ENCODE measurements at regions of chr18 and their contacts with region 1.

Region 1: GRCh38 chr18:3245853-3246634 is 1.6 kb upstream of the MYL12A start:
- DNase-seq: peak; percentile 82
- ATAC-seq: peak; percentile 59
- H3K4me3 ChIP-seq: no peak overlapping the region
- H3K27ac ChIP-seq: peak overlapping the region; percentile 97; the same call in 1 of the 2 replicates
- H3K4me1 ChIP-seq: peaks cover 6% of the 10 kb centered on the region; the same call in 1 of the 2 replicates
- H3K27me3 ChIP-seq: no peaks in the 10 kb centered on the region
- CTCF ChIP-seq: peak; percentile 89
- POLR2A ChIP-seq: peak; percentile 45; the same call in 1 of the 2 replicates
- RAD21 ChIP-seq: peak; percentile 95

Region 2: DNA sequence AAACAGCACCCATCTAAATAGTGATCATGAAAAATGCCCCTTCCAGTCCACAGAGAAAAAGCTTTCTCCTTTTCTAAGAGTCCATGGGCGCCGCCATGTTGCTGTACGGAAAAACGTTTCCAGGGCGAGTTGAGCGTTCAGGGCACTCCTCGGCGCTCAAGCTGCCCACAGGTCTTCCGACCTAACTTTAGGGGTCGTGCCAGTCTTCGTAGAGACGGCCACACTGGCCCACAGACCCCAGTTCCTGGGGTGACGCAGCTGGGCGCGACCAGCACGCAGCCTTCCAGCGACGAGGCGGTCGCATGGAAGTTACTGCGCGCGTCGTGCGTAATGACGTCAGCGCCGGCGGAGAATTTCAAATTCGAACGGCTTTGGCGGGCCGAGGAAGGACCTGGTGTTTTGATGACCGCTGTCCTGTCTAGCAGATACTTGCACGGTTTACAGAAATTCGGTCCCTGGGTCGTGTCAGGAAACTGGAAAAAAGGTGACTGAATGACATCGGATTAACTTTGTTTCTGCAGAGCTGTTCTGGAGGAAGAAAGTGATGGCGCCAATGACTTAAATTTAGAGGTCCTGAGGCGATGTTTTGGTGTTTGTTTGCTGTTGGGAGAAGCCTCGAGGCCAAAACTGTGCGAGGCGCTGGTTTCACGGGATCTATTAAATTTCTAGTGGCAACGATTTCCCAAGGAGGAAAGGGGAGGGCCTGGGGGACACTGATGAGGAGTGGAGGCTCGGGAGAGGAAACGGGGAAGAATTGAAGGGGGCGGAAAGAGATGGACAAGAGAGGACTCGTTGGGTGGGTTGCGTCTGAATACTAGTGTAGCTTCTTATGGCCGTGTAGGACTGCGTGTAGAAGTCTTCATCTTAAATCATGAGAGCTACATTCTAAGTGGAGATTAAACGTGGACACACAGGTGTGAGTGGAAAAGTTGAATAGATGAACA is 674.6 kb before region 1 on chr18 and contains the starts of genes METTL4 and NDC80:
- CTCF ChIA-PET with region 1: interaction called, 3 read pairs
- POLR2A ChIA-PET with region 1: no interaction called
- dilution Hi-C with region 1: no loop called
- in situ Hi-C with region 1: no loop called
- intact Hi-C with region 1: loop called (anchors 1 kb)
- DNase-seq: peak; percentile 86
- ATAC-seq: peak; percentile 87
- H3K4me3 ChIP-seq: peak within 1 kb of the TSS; percentile 66
- H3K27ac ChIP-seq: peak within 1 kb of the TSS; percentile 91
- H3K4me1 ChIP-seq: peaks cover 5% of the 10 kb centered on the region
- H3K27me3 ChIP-seq: no peaks in the 10 kb centered on the region
- CTCF ChIP-seq: no peak
- POLR2A ChIP-seq: peak; percentile 69
- RAD21 ChIP-seq: no peak
- total RNA-seq, gene METTL4: 5.4 and 6.7 TPM in 2 replicates
- total RNA-seq, gene NDC80: 11.8 and 15.3 TPM in 2 replicates

Region 3: DNA sequence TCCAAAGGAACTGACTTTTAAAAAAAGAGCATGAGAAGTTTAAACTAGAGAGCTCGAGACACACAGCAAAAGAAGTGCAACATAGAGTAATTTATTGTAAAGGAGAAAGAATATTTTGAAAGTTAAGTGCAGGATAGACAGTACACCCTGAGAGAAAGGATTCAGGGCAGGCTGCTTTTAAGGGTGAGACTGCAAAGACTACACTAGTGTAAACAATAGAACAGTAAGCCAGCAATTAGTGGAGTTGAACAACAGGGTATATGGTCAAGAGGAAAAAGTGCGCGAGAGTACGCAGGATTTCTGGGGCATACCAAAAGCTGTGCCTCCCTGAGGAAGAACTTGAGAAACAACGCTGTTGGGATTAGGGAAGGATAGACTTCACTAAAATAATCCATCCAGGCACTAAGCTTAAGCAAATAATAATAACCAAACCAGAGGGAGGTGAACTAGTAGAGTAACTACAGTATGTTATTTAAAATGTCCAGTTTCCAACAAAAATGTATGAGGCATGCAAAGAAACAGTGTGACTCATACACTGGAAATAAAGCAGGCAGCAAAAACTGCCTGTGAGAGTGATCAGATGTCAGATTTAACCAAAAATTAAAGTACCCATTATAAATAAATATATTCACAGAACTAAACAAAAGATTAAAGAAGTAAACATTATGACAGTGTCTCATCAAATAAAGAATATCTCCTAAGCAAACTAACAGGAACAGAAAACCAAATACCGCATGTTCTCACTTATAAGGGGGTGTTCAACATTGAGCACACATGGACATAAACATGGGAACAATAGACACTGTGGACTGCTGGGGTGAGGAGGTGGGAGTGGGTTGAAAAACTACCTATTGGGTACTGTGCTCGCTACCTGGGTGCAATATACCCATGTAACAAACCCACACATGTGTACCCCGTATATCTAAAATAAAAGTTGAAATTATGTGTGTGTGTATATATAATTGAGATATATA is 439.8 kb before region 1 on chr18:
- CTCF ChIA-PET with region 1: no interaction called
- POLR2A ChIA-PET with region 1: no interaction called
- dilution Hi-C with region 1: no loop called
- in situ Hi-C with region 1: no loop called
- intact Hi-C with region 1: loop called (anchors 10 kb)
- DNase-seq: peak; percentile 73
- ATAC-seq: peak; percentile 92
- H3K4me3 ChIP-seq: no peak overlapping the region
- H3K27ac ChIP-seq: peak overlapping the region; percentile 70; the same call in 1 of the 2 replicates
- H3K4me1 ChIP-seq: peaks cover 8% of the 10 kb centered on the region
- H3K27me3 ChIP-seq: no peaks in the 10 kb centered on the region
- CTCF ChIP-seq: no peak
- POLR2A ChIP-seq: no peak
- RAD21 ChIP-seq: no peak

Region 4: DNA sequence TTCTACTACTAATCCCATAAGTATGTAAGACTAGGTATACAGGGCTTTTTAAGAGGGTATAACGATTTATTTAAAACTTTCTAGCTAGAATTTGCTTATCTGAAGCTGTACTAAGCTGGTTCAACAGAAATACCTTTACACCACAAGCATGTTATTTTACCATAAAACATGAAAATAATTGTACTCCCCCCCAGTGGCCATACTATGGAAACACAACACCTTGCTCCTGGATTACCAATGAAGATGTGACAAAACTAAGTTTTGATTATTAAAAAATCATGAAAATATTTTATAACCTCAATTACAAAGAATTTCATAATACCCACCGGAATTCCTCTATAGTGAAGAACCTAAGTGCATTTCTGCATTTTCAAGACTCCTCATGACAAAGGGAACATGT is 260.4 kb before region 1 on chr18:
- CTCF ChIA-PET with region 1: no interaction called
- POLR2A ChIA-PET with region 1: no interaction called
- dilution Hi-C with region 1: no loop called
- in situ Hi-C with region 1: no loop called
- intact Hi-C with region 1: loop called (anchors 5 kb)
- DNase-seq: peak; percentile 54
- ATAC-seq: no peak
- H3K4me3 ChIP-seq: no peak overlapping the region
- H3K27ac ChIP-seq: peak overlapping the region; percentile 27; the same call in 1 of the 2 replicates
- H3K4me1 ChIP-seq: peaks cover 30% of the 10 kb centered on the region
- H3K27me3 ChIP-seq: no peaks in the 10 kb centered on the region
- CTCF ChIP-seq: peak; percentile 51
- POLR2A ChIP-seq: no peak
- RAD21 ChIP-seq: peak; percentile 48

Region 5: DNA sequence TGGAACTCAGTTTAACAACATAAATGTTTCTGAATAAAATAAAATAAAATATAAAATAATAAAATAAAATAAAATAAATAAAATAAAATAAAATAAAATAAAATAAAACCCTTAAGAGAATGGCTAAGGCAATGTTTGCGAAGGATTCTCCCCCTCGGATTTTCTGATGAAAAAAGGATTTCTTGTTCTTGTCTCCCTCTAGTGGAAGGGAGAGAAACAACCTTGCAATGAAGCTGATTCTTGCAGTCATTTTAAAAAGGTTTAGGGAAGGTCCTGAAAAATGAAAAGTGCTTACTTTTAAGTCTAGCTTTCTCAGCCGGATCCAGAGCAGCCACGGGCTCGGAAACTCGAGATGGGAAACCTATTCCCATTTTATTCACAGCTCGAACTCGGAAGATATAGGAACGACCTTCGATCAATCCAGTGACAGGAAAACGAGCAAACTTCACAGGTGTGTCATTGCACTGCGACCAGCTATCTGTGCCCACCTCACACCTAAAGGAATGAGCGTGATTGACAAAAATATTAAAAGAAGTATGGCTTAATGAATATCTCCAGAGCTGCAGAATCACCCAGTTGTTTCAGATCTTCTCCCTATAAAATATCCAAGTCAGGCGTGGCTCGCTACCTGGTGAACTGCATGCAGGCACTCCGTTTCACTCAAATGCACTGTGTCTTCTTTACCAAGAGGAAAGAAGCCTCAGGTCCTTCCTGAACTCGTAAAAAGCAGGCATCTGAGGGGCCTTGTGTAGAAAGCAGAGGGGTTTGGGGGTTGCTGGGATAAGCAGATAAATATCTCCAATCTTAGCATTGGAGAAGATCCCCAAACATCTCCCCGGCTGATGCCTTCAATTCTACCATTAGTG is 94.4 kb before region 1 on chr18:
- CTCF ChIA-PET with region 1: no interaction called
- POLR2A ChIA-PET with region 1: no interaction called
- dilution Hi-C with region 1: no loop called
- in situ Hi-C with region 1: no loop called
- intact Hi-C with region 1: loop called (anchors 1 kb)
- DNase-seq: peak; percentile 52
- ATAC-seq: no peak
- H3K4me3 ChIP-seq: no peak overlapping the region
- H3K27ac ChIP-seq: no peak overlapping the region
- H3K4me1 ChIP-seq: no peaks in the 10 kb centered on the region
- H3K27me3 ChIP-seq: no peaks in the 10 kb centered on the region; the same call in 1 of the 2 replicates
- CTCF ChIP-seq: peak; percentile 74
- POLR2A ChIP-seq: no peak
- RAD21 ChIP-seq: peak; percentile 64

Measured in IMR-90 (cell line).